Gastrocnemius medialis (tissue), 4 donors: ENCODE measurements at regions of chr9 and their contacts with region 1.

Region 1: GRCh38 chr9:4555251-4555650 is 65.0 kb downstream of the SLC1A1 start:
- DNase-seq: no peak
- ATAC-seq: peak; percentile 31 to 37
- H3K4me3 ChIP-seq: no peak overlapping the region
- H3K27ac ChIP-seq: peak overlapping the region; percentile 36 to 73 (median 50)
- H3K4me1 ChIP-seq: peaks cover 20 to 21% of the 10 kb centered on the region in 2 donors
- H3K27me3 ChIP-seq: no peaks in the 10 kb centered on the region
- CTCF ChIP-seq: no peak
- POLR2A ChIP-seq: no peak

Region 2: DNA sequence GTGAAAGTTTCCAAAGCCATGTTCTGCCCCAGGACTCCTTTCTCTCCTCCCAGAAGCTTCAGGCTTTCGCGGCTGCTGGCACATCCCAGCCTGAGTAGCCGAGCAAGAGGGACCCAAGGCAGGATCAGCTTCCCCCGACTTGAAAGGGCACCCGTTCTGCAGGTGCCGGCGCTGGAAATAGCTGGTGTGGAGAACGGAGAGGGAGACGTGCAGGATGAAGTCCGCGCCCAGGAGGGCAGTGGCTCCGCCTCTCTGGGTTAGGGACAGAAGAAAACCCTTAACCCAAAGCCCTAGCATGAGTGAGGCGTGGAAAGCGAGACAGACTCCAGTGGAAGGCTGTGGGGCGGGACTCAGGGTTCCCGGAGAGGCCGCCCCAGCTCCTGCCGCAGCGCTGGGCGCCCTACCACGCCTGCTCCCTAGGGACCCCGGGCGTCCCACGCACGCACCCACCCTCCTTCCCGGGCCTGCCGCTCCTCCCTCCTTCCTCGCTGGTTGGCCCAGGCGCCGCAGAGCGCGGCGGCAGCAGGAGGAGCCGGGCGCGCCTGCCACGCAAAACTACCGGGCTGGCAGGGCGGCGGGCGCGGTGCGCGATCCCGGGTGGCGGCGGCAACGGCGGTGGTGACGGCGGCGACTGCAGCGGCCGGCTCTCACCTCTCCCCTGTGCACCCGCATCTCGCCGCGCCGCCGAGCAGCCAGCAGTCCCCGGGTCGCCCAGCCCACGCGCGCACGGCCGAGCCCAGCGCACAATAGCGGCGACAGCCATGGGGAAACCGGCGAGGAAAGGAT is 65.1 kb before region 1 on chr9 and contains the start of gene SLC1A1:
- in situ Hi-C with region 1: no loop called
- intact Hi-C with region 1: loop called (anchors 5 kb)
- DNase-seq: peak; percentile 19 to 26
- ATAC-seq: peak; percentile 71 to 77
- H3K4me3 ChIP-seq: peak within 1 kb of the TSS; percentile 64 to 80 (median 70)
- H3K27ac ChIP-seq: peak within 1 kb of the TSS; percentile 33 to 68 (median 62)
- H3K4me1 ChIP-seq: peaks cover 3 to 13% of the 10 kb centered on the region in 2 donors
- H3K27me3 ChIP-seq: peaks cover 0 to 5% (median 0%) of the 10 kb centered on the region in 3 donors
- CTCF ChIP-seq: no peak
- POLR2A ChIP-seq: no peak
- total RNA-seq, gene SLC1A1: 1.2 to 2.2 (median 1.6) TPM